Activated CD4-positive, alpha-beta memory T cell treated with anti-CD3 and anti-CD28 coated beads, Interleukin-2, amount 10 ng/mL, durations not matched to agents 7 days and 5 days (primary cell): ENCODE measurements at regions of chr1 and their contacts with region 1.

Region 1: DNA sequence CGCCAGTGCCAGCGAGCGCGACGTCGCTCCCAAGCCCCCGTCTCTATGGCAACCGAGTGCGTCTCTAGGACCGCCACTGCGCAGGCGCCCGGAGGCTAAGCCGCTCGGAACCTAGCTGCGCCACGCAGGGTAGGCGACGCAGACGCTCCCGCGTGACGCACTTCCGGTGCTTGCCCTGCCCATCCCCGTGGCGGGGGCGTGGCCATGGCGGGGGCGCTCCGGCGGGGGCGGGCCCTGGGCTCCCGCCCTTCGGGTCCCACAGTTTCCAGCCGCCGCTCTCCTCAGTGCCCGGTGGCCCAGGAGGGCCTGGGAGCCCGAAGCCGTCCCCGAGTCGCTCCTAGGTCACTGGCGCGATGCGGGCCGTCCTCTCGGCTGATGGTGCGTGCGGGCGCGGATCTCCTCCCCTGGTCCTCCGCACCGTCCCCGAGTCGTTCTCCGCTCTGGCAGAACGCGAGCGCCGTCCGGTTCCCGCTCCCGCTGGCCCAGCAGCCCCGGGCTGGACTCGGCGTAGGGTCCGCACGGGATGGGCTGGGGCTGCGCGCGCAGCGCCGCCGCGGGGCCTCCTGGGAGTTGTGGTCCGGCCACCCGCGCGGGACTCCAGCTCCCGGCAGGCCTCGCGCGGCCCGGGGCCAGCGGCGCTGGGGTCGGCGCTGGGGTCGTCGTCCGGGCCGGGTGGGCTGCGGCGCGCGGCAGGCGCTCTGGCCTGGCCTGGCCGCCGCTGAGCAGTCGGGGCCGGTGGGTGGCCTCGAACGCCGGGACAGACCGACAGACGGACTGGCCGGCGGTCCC is at the start of gene MIB2:
- DNase-seq: peak; percentile 98
- H3K4me3 Mint-ChIP-seq: peak within 1 kb of the TSS; percentile 89
- H3K27ac Mint-ChIP-seq: peak within 1 kb of the TSS; percentile 91
- H3K4me1 Mint-ChIP-seq: peaks cover 36% of the 10 kb centered on the region
- H3K27me3 Mint-ChIP-seq: no peaks in the 10 kb centered on the region
- total RNA-seq, gene MIB2: 37.2 to 37.5 TPM

Region 2: DNA sequence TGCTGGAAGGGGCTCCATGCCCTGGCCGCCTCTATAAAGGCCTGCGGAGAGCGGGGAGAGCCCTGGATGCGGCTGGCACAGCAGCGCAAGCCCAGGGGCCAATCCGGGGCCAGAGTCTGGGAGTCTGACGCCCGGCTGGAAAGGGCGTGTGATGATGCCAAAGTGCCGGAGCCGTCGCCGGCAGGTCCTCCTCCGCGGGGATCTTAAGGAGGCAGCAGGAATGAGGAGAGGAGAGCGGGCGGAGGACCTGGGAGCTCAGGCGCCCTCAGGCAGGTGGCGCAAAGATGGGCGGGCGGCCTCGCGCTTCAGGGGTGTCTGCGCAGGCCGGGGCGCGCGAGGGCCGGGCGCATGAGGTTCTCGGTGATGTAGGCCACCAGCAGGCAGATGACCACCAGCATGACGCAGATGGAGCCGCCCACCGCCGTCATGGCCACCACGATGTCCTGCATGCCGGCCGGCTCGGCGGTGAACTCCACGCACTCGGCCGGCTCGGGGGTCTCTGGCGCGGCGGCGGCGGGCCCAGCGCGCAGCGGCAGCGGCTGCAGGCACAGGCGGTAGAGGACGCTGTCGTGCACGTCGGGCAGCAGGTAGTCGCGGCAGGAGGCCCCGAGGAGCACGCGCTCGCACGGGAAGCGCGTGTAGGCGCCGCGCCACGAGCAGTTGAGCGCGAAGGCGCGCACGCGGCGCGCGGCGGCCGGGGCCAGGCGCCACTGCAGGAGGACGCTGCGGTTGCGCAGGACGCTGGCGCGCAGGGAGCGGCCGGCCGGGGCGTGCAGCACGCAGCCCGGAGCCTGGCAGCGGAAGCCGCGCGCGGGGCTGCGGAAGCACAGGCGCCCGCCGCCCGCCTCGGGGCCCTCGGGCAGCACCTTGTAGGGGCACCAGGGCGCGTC is 16.2 kb before region 1 on chr1:
- CTCF ChIA-PET with region 1: interaction called, 3 read pairs
- POLR2A ChIA-PET with region 1: interaction called, 16 read pairs
- DNase-seq: peak; percentile 55
- H3K4me3 Mint-ChIP-seq: peak overlapping the region; percentile 72
- H3K27ac Mint-ChIP-seq: peak overlapping the region; percentile 40
- H3K4me1 Mint-ChIP-seq: peaks cover 8% of the 10 kb centered on the region
- H3K27me3 Mint-ChIP-seq: peaks cover 9% of the 10 kb centered on the region

Region 3: GRCh38 chr1:1630271-1630964 is 15.0 kb after region 1 on chr1:
- CTCF ChIA-PET with region 1: no interaction called
- POLR2A ChIA-PET with region 1: interaction called, 42 read pairs
- DNase-seq: peak; percentile 95
- H3K4me3 Mint-ChIP-seq: peak overlapping the region; percentile 79
- H3K27ac Mint-ChIP-seq: peak overlapping the region; percentile 83
- H3K4me1 Mint-ChIP-seq: peaks cover 5% of the 10 kb centered on the region
- H3K27me3 Mint-ChIP-seq: peaks cover 4% of the 10 kb centered on the region